ENCODE measurements at regions of chr3 and their contacts with region 1.

Region 1: DNA sequence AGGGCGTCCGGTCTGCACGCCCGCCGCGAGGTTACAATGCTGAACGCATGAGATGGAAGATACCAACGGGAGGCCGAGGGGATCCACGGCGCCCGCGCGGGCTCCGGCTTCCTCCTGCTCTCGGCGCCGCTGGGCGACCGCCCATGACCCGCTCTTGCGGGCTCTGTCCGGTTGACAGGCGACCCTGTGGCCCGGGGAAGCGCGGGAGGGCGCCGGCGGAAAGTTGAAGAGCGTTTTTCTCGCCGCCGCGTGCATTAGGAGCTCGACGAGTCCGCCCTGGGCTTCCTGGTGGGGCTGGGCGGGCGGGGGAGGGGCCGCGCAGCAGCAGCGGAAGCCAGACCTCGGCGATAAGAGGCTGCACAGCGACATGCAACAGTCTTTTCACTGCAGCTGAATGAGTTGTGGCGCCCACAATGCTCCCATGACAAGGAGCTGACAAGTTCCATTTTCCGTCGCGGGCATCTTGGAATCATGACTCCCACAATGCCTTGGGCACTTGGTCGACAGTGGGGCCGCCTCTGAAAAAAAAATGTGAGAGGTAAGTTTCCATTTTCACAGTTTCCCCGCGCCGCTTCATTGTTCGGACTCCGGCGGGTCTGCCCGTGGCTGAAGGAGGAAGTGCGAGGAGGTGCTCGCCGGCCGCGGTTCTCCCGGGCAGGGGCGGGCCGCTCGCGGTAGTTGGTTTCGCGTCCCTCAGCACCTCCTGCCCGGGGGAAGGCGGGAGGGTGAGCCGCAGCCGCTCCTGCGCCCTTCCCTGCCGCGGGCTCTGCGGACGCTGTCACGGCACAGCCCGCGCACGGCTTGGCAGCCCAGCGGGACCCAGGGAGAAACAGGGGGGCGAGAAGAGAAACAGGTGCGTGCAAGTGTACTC is at the start of gene MBNL1:
- DNase-seq: peak; percentile 93
- ATAC-seq: peak; percentile 78
- total RNA-seq, gene MBNL1: 180 TPM

Region 2: DNA sequence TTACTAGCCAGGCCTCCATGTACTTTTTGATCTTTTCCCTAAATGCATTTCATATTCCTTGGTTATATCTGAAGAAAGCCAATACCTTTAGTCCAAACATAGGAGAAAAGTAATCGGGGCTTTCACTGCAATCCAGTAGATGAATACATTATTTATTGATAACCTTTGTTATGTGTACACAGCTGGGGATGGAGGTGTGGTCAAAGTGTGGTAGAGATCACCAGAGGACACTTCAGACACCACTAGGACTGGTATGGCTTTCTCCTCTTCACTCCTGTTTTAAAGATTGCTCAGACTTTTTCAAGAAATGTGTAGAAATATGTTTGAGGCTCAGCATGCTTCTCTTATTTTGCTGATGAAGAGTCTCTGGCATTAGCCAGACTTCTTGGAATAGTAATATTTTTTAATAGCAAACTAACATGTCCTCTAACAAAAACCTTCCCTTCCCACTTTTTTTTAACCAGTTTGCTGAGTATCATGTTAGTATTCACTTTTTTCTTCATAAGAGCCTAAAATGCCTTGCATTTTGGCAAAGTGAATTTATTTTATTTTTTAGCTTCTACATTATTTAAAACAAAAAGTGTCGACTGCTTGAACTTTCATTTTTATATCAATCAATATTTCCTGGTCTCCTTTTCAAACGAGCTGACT is 65.7 kb before region 1 on chr3:
- intact Hi-C with region 1: loop called (anchors 5 kb)
- DNase-seq: no peak
- ATAC-seq: no peak

Region 3: GRCh38 chr3:152298393-152299242 is 29.8 kb after region 1 on chr3:
- intact Hi-C with region 1: loop called (anchors 2 kb)
- DNase-seq: peak; percentile 45
- ATAC-seq: peak; percentile 78

Region 4: DNA sequence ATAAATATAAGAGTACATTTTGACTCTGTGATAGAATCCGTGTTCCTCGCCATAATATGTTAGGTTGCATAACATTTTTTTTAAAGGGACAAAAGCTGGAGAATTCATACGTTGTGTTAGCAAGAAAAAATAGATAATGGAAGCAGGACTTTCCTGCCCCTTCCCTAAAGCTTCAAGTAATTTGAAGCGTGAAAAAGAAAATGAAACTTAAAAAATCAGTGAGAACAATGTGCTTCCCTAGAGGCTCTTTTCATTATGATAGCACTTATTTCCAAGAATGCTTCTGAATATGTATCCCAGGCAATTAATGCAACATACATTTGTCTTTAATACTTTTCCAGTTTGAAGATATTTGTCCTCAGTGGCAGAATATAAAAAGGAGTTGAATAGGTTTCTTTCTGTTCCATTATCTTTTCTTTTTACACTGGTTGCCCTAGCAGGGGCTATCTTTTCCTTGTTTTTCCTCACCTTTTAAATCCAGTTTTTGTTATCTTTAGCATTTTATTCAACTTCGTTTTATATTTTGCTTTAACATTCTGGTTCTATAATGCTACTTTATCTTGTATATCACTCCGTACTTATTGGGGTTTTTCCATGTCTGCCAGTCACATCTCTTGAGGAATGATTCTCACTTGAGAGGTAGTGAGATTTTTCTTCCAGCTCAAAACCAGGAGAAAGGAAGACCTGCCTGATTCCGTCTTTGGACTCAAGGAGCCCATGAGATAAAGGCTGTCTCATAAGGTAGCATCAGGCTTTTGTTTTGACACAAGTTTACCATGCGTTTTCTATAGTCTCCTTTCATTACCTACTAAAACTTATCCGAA is 113.7 kb after region 1 on chr3:
- intact Hi-C with region 1: loop called (anchors 5 kb)
- DNase-seq: no peak
- ATAC-seq: peak; percentile 22

Region 5: GRCh38 chr3:152405915-152406802 is 137.4 kb after region 1 on chr3:
- intact Hi-C with region 1: loop called (anchors 10 kb)
- DNase-seq: no peak
- ATAC-seq: peak; percentile 75